HepG2 (cell line): ENCODE measurements at regions of chr5 and their contacts with region 1.

Region 1: GRCh38 chr5:93620487-93621326 is 37.7 kb downstream of the NR2F1 start:
- DNase-seq: peak; percentile 50
- ATAC-seq: peak; percentile 97
- H3K4me3 ChIP-seq: peak overlapping the region; percentile 55 to 81 (median 80)
- H3K27ac ChIP-seq: peak overlapping the region; percentile 59
- H3K4me1 ChIP-seq: peaks cover 6% of the 10 kb centered on the region
- H3K27me3 ChIP-seq: no peaks in the 10 kb centered on the region
- CTCF ChIP-seq: peak; percentile 56
- EP300 ChIP-seq: no peak
- POLR2A ChIP-seq: no peak
- RAD21 ChIP-seq: peak; percentile 44

Region 2: GRCh38 chr5:93249651-93250289 is 370.9 kb before region 1 on chr5:
- CTCF ChIA-PET with region 1: no interaction called
- POLR2A ChIA-PET with region 1: no interaction called
- in situ Hi-C with region 1: no loop called
- intact Hi-C with region 1: no loop called
- DNase-seq: no peak
- ATAC-seq: no peak
- H3K4me3 ChIP-seq: no peak overlapping the region
- H3K27ac ChIP-seq: no peak overlapping the region
- H3K4me1 ChIP-seq: peaks cover 52% of the 10 kb centered on the region
- H3K27me3 ChIP-seq: no peaks in the 10 kb centered on the region
- CTCF ChIP-seq: no peak
- EP300 ChIP-seq: no peak
- POLR2A ChIP-seq: no peak
- RAD21 ChIP-seq: no peak

Region 3: GRCh38 chr5:93705896-93706295 is 85.2 kb after region 1 on chr5:
- CTCF ChIA-PET with region 1: no interaction called
- POLR2A ChIA-PET with region 1: no interaction called
- in situ Hi-C with region 1: no loop called
- intact Hi-C with region 1: no loop called
- DNase-seq: no peak
- ATAC-seq: no peak
- H3K4me3 ChIP-seq: no peak overlapping the region
- H3K27ac ChIP-seq: no peak overlapping the region
- H3K4me1 ChIP-seq: no peaks in the 10 kb centered on the region
- H3K27me3 ChIP-seq: no peaks in the 10 kb centered on the region
- CTCF ChIP-seq: no peak
- EP300 ChIP-seq: no peak
- POLR2A ChIP-seq: no peak
- RAD21 ChIP-seq: no peak

Region 4: DNA sequence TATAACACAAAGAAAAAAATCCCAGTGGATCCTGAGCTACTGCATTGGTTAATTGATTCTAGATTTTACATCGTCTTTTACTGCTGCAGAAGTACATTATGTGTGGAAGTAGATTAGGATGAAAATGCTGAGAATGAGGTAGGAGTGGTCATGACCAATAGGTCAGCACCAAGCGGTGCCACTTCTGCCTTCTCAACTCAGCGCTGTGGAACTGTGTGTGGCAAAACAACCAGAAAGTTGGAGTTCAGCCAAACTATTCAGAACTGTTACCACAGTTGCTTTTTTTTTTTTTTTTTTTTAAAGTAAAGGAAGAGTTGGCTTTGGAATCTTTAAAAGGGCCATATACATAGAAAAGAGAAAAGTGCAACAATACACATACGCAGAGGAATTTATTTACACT is 96.5 kb after region 1 on chr5:
- CTCF ChIA-PET with region 1: no interaction called
- POLR2A ChIA-PET with region 1: no interaction called
- in situ Hi-C with region 1: no loop called
- intact Hi-C with region 1: loop called (anchors 5 kb)
- DNase-seq: peak; percentile 45
- ATAC-seq: peak; percentile 60; the same call in 2 of the 3 replicates
- H3K4me3 ChIP-seq: no peak overlapping the region
- H3K27ac ChIP-seq: no peak overlapping the region
- H3K4me1 ChIP-seq: peaks cover 33% of the 10 kb centered on the region
- H3K27me3 ChIP-seq: no peaks in the 10 kb centered on the region
- CTCF ChIP-seq: no peak
- EP300 ChIP-seq: no peak
- POLR2A ChIP-seq: no peak
- RAD21 ChIP-seq: no peak

Region 5: GRCh38 chr5:93756372-93756771 is 135.7 kb after region 1 on chr5:
- CTCF ChIA-PET with region 1: no interaction called
- POLR2A ChIA-PET with region 1: no interaction called
- in situ Hi-C with region 1: no loop called
- intact Hi-C with region 1: no loop called
- DNase-seq: no peak
- ATAC-seq: no peak
- H3K4me3 ChIP-seq: no peak overlapping the region
- H3K27ac ChIP-seq: no peak overlapping the region
- H3K4me1 ChIP-seq: no peaks in the 10 kb centered on the region
- H3K27me3 ChIP-seq: no peaks in the 10 kb centered on the region
- CTCF ChIP-seq: no peak
- EP300 ChIP-seq: no peak
- POLR2A ChIP-seq: no peak
- RAD21 ChIP-seq: no peak

Region 6: DNA sequence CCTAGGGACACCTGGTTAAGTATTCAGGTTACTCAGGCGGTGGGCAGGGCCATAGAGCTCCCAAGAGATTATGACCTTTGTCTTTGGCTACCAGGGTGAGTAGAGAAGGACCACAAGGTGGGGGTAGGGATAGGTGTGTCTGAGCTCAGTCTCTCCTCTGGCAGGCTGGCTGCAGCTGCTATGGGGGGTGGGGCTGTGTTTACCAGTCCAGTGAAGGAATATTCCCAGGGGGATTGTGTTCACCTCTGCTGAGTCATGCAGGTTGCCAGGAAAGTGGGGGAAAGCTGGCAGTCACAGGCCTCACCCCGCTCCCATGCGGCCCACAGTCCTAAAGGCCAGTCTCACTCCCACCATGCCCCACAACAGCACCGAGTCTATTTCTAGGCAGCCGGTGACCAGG is 174.2 kb after region 1 on chr5:
- CTCF ChIA-PET with region 1: no interaction called
- POLR2A ChIA-PET with region 1: no interaction called
- in situ Hi-C with region 1: no loop called
- intact Hi-C with region 1: loop called (anchors 5 kb)
- DNase-seq: peak; percentile 41
- ATAC-seq: peak; percentile 62
- H3K4me3 ChIP-seq: no peak overlapping the region
- H3K27ac ChIP-seq: no peak overlapping the region
- H3K4me1 ChIP-seq: peaks cover 24% of the 10 kb centered on the region
- H3K27me3 ChIP-seq: no peaks in the 10 kb centered on the region
- CTCF ChIP-seq: no peak
- EP300 ChIP-seq: no peak
- POLR2A ChIP-seq: no peak
- RAD21 ChIP-seq: no peak